Mammary epithelial cell (primary cell): ENCODE measurements at regions of chr19 and their contacts with region 1.

Region 1: GRCh38 chr19:46668662-46669061 is 7.7 kb upstream of the DACT3 start:
- DNase-seq: no peak
- H3K4me3 ChIP-seq: no peak overlapping the region
- H3K27ac ChIP-seq: no peak overlapping the region
- H3K4me1 ChIP-seq: no peaks in the 10 kb centered on the region
- H3K27me3 ChIP-seq: no peaks in the 10 kb centered on the region
- CTCF ChIP-seq: no peak

Region 2: GRCh38 chr19:46515879-46516350 is 152.7 kb before region 1 on chr19:
- CTCF ChIA-PET with region 1: no interaction called
- dilution Hi-C with region 1: no loop called
- in situ Hi-C with region 1: no loop called
- intact Hi-C with region 1: no loop called
- DNase-seq: peak; percentile 47
- H3K4me3 ChIP-seq: no peak overlapping the region
- H3K27ac ChIP-seq: no peak overlapping the region
- H3K4me1 ChIP-seq: peaks cover 5% of the 10 kb centered on the region
- H3K27me3 ChIP-seq: no peaks in the 10 kb centered on the region
- CTCF ChIP-seq: peak; percentile 66 to 69

Region 3: GRCh38 chr19:46614114-46614722 is 54.4 kb before region 1 on chr19:
- CTCF ChIA-PET with region 1: no interaction called
- dilution Hi-C with region 1: no loop called
- in situ Hi-C with region 1: loop called (anchors 5 kb)
- intact Hi-C with region 1: no loop called
- DNase-seq: peak; percentile 47
- H3K4me3 ChIP-seq: no peak overlapping the region
- H3K27ac ChIP-seq: no peak overlapping the region
- H3K4me1 ChIP-seq: no peaks in the 10 kb centered on the region
- H3K27me3 ChIP-seq: no peaks in the 10 kb centered on the region
- CTCF ChIP-seq: peak; percentile 63 to 86